Common myeloid progenitor, CD34-positive (primary cell): ENCODE measurements at regions of chr14 and their contacts with region 1.

Region 1: DNA sequence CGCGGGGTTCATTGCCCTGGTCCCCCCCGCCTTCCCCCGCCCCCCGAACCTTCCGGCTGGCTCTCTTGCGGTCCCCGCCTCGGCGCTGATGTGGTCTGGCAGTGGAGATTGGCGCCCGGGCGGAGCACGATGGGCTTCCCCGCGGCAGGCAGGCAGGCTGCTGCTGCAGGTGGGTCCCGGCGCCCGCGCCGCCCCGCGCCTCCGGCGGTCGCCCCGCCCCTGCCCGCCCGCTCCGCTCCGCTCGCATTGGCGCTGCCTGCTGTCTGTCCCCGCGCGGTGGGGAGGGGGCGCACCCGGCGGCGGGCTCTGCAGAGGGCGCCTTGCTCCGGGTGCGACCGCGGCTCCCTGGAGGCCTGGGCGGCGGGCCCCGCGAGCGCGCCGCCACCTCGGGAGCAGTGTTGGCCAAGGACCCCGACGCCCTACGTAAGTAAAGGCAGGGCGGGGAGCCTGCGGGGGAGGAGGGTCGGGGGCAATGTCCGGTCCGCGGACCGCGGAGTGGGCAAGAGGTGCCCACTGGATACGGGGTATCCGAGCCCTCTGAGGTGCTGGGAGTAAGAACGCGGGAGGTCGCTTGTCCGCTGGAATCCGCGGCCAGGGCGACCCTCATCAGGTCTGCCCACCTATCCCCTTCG is at the start of gene AKAP5:
- DNase-seq: peak; percentile 58 to 88 (median 82)
- H3K4me3 ChIP-seq: peak within 1 kb of the TSS; percentile 63 to 86 (median 72)
- H3K27ac ChIP-seq: no peak within 1 kb of the TSS
- H3K4me1 ChIP-seq: peaks cover 11 to 16% (median 14%) of the 10 kb centered on the region in 4 experiments
- H3K27me3 ChIP-seq: no peaks in the 10 kb centered on the region

Region 2: GRCh38 chr14:64338616-64339316 is 126.5 kb before region 1 on chr14:
- CTCF ChIA-PET with region 1: interaction called, 10 read pairs
- POLR2A ChIA-PET with region 1: no interaction called
- DNase-seq: peak; percentile 95 to 98 (median 97)
- H3K4me3 ChIP-seq: peak overlapping the region; percentile 60 to 92 (median 86)
- H3K27ac ChIP-seq: peak overlapping the region in 1 of 2 experiments; percentile 47
- H3K4me1 ChIP-seq: peaks cover 8 to 21% (median 13%) of the 10 kb centered on the region in 4 experiments
- H3K27me3 ChIP-seq: no peaks in the 10 kb centered on the region

Region 3: DNA sequence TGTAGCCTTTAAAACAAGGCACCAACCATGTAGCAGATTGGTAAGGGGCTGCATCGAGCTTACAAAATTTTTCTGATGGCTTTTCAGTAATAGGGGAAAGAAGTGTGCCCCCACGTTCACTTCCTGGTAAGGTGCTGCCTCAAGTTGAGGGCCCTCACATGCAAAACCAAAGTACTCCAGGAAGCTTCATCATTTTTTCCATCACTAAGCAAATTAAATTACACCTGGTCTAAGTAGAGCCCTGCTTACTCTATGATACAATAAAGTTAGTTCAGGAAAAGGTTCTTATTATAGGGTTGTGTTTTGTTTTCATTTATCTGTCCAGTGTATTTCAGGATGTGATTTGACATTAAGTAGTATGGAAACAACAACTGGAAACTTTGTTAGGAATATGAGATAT is 15.1 kb before region 1 on chr14:
- CTCF ChIA-PET with region 1: interaction called, 10 read pairs
- POLR2A ChIA-PET with region 1: no interaction called
- DNase-seq: no peak
- H3K4me3 ChIP-seq: no peak overlapping the region
- H3K27ac ChIP-seq: no peak overlapping the region
- H3K4me1 ChIP-seq: peaks cover 0 to 4% (median 0%) of the 10 kb centered on the region in 4 experiments
- H3K27me3 ChIP-seq: no peaks in the 10 kb centered on the region